AG04449 (cell line): ENCODE measurements at regions of chr17 and their contacts with region 1.

Region 1: GRCh38 chr17:6473128-6473767 is 29.0 kb downstream of the PIMREG start:
- DNase-seq: no peak
- H3K4me3 ChIP-seq: no peak overlapping the region
- CTCF ChIP-seq: peak; percentile 96

Region 2: DNA sequence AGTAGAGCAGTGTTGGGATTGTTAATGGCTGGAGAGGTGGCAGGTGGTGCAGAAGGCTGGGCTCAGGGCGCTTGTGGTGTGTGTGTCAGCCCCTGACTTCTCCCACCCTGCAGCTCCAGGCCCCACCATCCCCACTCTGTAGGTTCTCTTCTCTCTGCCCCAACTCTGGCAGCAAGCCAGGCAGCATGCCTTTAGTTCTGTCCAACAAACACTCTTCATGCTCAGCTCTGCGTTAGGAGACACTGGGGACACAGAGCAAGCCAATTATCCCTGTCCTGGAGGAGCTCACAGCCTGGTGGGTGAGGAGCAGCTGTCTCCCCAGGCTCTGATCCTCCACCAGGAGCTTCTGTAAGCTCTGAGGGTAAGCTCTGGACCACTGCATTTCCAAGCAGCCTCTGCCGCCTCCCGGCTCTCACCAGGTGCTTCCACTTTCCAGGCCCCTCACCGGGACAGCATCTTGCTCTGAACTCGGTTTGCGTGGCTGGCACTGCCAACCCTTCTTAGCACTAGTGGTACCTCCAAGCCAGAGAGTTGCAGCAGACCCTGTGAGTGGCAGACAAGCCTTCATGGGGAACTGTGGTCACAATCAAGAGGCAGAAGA is 437.4 kb before region 1 on chr17:
- CTCF ChIA-PET with region 1: no interaction called
- POLR2A ChIA-PET with region 1: no interaction called
- DNase-seq: no peak
- H3K4me3 ChIP-seq: no peak overlapping the region
- CTCF ChIP-seq: no peak

Region 3: GRCh38 chr17:6454957-6455705 is 18.1 kb before region 1 on chr17:
- CTCF ChIA-PET with region 1: interaction called, 27 read pairs
- POLR2A ChIA-PET with region 1: no interaction called
- DNase-seq: no peak
- H3K4me3 ChIP-seq: no peak overlapping the region
- CTCF ChIP-seq: no peak

Region 4: DNA sequence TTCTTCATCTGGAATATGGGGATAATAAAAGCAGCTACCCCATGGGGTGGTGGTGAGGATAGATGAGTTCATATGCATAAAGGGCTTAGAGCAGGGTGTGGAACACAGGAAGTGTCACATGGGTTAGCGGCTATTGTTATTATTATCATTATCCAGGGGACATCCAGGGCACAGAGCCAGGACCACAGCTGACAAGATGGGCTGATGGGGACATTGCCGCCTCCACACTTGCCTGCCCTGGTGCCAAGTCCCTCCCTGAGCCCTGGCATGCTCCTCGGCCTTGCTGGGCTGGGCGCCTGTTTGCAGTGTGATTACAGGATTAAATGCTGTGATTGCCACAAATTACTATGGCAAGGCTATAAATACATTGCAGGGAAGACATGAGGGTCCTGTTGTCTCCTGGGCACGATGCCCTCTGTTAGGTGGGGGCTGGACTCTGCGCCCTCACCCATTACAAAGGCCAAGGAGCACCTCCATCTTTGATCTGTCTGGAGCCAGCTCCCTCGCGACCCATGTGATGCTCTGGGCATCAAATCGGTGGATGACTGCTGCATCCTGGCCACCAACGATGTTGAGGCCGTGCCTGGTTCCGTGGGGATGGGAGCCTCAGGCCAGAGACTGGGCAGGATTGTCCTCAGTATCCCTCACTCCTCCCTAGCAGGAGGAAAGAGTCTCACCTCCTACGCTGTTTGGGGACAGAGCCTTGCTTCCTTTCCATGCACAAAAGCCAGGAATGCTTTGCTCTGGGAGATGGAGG is 14.2 kb after region 1 on chr17:
- CTCF ChIA-PET with region 1: interaction called, 94 read pairs
- POLR2A ChIA-PET with region 1: no interaction called
- DNase-seq: no peak
- H3K4me3 ChIP-seq: no peak overlapping the region
- CTCF ChIP-seq: no peak

Region 5: GRCh38 chr17:6574687-6575595 is 101.7 kb after region 1 on chr17:
- CTCF ChIA-PET with region 1: interaction called, 11 read pairs
- POLR2A ChIA-PET with region 1: no interaction called
- DNase-seq: peak; percentile 26
- H3K4me3 ChIP-seq: no peak overlapping the region; the same call in 1 of the 2 replicates
- CTCF ChIP-seq: peak; percentile 17

Region 6: GRCh38 chr17:6640536-6641373 is 167.5 kb after region 1 on chr17 and contains the starts of genes KIAA0753 and TXNDC17:
- CTCF ChIA-PET with region 1: interaction called, 26 read pairs
- POLR2A ChIA-PET with region 1: interaction called, 4 read pairs
- DNase-seq: peak; percentile 63
- H3K4me3 ChIP-seq: peak within 1 kb of the TSS; percentile 97
- CTCF ChIP-seq: no peak